ENCODE measurements at regions of chr1 and their contacts with region 1.

Region 1: DNA sequence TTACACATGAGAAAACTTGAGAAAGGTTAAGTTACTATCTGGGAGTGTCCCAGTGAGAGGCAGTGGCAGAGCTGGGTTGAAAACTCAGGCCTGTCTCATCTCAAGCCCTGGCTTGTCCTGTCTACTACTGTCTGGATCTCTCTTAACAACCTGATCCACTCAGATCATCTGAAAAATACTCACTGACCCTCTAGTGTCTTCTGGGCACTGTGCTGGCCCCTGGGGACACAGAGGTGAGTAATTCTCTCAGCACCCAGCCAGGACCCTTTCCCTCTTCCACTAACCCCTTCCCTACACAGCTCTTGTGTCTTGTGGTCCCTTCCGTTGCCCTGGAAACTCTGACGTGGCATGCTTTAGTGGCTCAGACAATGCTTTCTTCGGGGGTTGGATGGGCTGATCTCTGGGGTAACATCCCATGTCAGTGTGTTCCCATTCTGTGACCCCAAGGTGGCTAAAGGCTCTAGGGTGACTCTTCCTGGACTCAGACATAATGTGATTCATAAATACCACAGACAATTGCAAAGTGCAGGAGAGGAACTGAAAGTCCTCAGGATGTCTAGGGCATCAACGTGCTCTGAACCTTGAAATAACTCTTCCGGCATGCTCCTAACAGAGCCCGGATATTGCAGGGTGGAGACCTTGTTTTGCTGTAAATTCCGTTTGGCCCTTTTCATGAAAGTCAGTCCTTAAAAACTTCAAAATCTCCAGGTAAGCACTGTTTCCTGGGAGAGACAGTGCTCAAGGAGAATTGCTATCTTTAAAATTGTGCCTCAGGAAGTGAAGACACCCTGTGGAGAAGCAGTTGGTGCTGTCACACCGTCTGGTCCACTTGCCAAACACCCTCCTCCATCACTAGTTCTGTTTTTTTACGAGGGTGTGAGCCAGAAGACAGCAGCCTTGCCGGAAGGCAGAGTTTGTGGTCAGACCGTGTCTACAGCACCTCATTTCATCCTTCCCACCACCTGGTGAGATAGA is 4.0 kb downstream of the SHISAL2A start:
- DNase-seq: peak; percentile 39 to 88 (median 83)
- ATAC-seq: peak; percentile 79
- H3K4me3 ChIP-seq: peak overlapping the region; percentile 19
- H3K4me3 Mint-ChIP-seq: peak overlapping the region; percentile 78 to 94 (median 86)
- H3K27ac ChIP-seq: peak overlapping the region; percentile 95
- H3K27ac Mint-ChIP-seq: peak overlapping the region; percentile 96 to 100 (median 99)
- H3K4me1 ChIP-seq: peaks cover 63 to 82% of the 10 kb centered on the region in 2 donors
- H3K4me1 Mint-ChIP-seq: peaks cover 52 to 85% (median 79%) of the 10 kb centered on the region in 7 donors
- H3K27me3 ChIP-seq: no peaks in the 10 kb centered on the region
- H3K27me3 Mint-ChIP-seq: peaks cover 0 to 11% (median 0%) of the 10 kb centered on the region in 5 donors

Region 2: GRCh38 chr1:52601991-52602855 is 34.8 kb before region 1 on chr1 and contains the start of gene GPX7:
- CTCF ChIA-PET with region 1: interaction called, 6 read pairs
- POLR2A ChIA-PET with region 1: interaction called, 104 read pairs
- intact Hi-C with region 1: loop called (anchors 1 kb)
- DNase-seq: peak; percentile 45 to 68 (median 62)
- ATAC-seq: peak; percentile 84
- H3K4me3 ChIP-seq: peak within 1 kb of the TSS; percentile 83
- H3K4me3 Mint-ChIP-seq: peak within 1 kb of the TSS; percentile 91 to 95 (median 92)
- H3K27ac ChIP-seq: peak within 1 kb of the TSS; percentile 82
- H3K27ac Mint-ChIP-seq: peak within 1 kb of the TSS; percentile 85 to 97 (median 95)
- H3K4me1 ChIP-seq: peaks cover 25 to 29% of the 10 kb centered on the region in 2 donors
- H3K4me1 Mint-ChIP-seq: peaks cover 38 to 57% (median 50%) of the 10 kb centered on the region in 7 donors
- H3K27me3 ChIP-seq: no peaks in the 10 kb centered on the region
- H3K27me3 Mint-ChIP-seq: no peaks in the 10 kb centered on the region
- total RNA-seq, gene GPX7: 14.8 to 32.8 (median 29.2) TPM

Region 3: DNA sequence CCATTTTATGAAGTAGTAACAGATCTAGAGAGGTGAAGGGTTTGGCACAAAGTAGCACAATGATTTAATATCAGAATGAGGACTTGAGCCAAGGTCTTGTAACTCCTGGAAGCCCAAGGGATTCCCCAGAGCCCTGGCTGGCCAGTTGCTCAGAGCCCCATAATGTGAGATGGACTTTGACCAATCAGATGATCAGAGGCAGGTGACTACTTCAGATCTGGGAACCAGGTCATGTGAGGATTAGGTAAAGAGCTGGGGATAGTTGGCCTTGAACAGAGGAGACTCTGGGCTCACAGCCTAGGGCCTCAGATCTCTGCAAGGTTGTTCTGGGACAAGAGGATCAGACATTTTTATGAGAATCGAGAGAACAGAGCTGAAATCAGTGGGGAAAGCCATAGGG is 14.9 kb after region 1 on chr1:
- CTCF ChIA-PET with region 1: interaction called, 4 read pairs
- POLR2A ChIA-PET with region 1: interaction called, 12 read pairs
- intact Hi-C with region 1: no loop called
- DNase-seq: no peak
- ATAC-seq: no peak
- H3K4me3 ChIP-seq: no peak overlapping the region
- H3K4me3 Mint-ChIP-seq: no peak overlapping the region
- H3K27ac ChIP-seq: peak overlapping the region; percentile 18
- H3K27ac Mint-ChIP-seq: peak overlapping the region in 8 of 9 donors; percentile 43 to 92 (median 66)
- H3K4me1 ChIP-seq: no peaks in the 10 kb centered on the region
- H3K4me1 Mint-ChIP-seq: peaks cover 5 to 49% (median 23%) of the 10 kb centered on the region in 7 donors
- H3K27me3 ChIP-seq: no peaks in the 10 kb centered on the region
- H3K27me3 Mint-ChIP-seq: no peaks in the 10 kb centered on the region

Region 4: GRCh38 chr1:52667290-52667689 is 30.3 kb after region 1 on chr1:
- CTCF ChIA-PET with region 1: interaction called, 5 read pairs
- POLR2A ChIA-PET with region 1: interaction called, 6 read pairs
- intact Hi-C with region 1: loop called in 1 of 2 experiments (anchors 2 kb)
- DNase-seq: no peak
- ATAC-seq: no peak
- H3K4me3 ChIP-seq: no peak overlapping the region
- H3K4me3 Mint-ChIP-seq: no peak overlapping the region
- H3K27ac ChIP-seq: no peak overlapping the region
- H3K27ac Mint-ChIP-seq: peak overlapping the region in 4 of 9 donors; percentile 26 to 67 (median 46)
- H3K4me1 ChIP-seq: no peaks in the 10 kb centered on the region
- H3K4me1 Mint-ChIP-seq: peaks cover 0 to 22% (median 10%) of the 10 kb centered on the region in 7 donors
- H3K27me3 ChIP-seq: no peaks in the 10 kb centered on the region
- H3K27me3 Mint-ChIP-seq: no peaks in the 10 kb centered on the region